HEK293 (cell line): ENCODE measurements at regions of chr5 and their contacts with region 1.

Region 1: GRCh38 chr5:150560401-150561193 is 52.7 kb downstream of the NDST1 start:
- H3K4me3 ChIP-seq: no peak overlapping the region
- H3K27ac ChIP-seq: no peak overlapping the region
- H3K4me1 ChIP-seq: no peaks in the 10 kb centered on the region
- CTCF ChIP-seq: peak; percentile 46

Region 2: GRCh38 chr5:150458819-150459557 is 101.6 kb before region 1 on chr5:
- CTCF ChIA-PET with region 1: interaction called, 64 read pairs
- POLR2A ChIA-PET with region 1: no interaction called
- H3K4me3 ChIP-seq: no peak overlapping the region
- H3K27ac ChIP-seq: no peak overlapping the region
- H3K4me1 ChIP-seq: peaks cover 8% of the 10 kb centered on the region
- CTCF ChIP-seq: peak; percentile 75

Region 3: GRCh38 chr5:150523472-150524350 is 36.9 kb before region 1 on chr5:
- CTCF ChIA-PET with region 1: no interaction called
- POLR2A ChIA-PET with region 1: no interaction called
- H3K4me3 ChIP-seq: no peak overlapping the region
- H3K27ac ChIP-seq: no peak overlapping the region
- H3K4me1 ChIP-seq: no peaks in the 10 kb centered on the region
- CTCF ChIP-seq: peak; percentile 66; the same call in 1 of the 2 replicates

Region 4: DNA sequence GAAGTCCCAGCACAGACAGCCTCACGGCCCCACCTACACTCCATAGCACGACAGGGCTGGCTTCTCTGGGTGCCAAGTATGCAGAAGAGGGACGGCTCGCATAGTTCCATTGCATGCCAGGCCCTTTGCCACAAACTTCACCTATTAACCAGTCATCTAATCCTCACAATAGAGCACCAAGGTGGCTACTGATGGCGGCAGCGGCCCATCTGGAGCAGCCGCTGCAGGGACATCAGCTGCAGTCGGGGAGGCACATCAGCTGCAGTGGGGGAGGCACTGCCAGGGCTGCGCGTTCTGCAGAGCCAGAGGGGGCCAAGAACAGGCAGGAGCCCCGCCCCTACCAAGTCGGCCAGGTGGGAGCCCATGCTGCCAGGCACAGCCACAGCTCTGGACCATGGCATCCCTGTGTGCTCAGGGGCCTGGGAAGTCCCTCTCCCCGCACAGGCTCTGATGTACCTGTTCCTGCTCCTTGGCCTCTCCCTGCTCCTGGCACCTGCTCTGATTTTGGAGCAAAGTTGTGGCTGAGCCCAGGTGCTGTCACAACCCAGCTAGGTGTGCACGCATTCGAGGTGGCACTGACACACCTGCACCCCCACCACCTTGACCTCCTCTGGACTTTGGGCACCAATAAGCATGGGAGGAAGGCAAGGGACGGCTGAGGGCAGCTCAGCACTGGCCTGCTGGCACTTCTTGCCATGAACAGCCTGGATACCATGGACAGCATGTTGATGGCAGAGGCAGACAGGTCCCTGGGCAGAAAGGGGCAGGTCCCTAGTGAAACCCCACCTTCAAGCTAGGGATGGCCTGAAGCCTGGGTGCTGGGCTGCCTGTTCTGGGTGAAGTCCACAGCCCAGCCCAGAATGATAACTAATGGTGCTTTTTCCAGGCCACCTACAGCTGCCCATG is 18.4 kb after region 1 on chr5:
- CTCF ChIA-PET with region 1: interaction called, 14 read pairs
- POLR2A ChIA-PET with region 1: no interaction called
- H3K4me3 ChIP-seq: no peak overlapping the region
- H3K27ac ChIP-seq: no peak overlapping the region
- H3K4me1 ChIP-seq: no peaks in the 10 kb centered on the region
- CTCF ChIP-seq: no peak

Region 5: GRCh38 chr5:150640311-150641005 is 79.9 kb after region 1 on chr5 and contains the start of gene SYNPO:
- CTCF ChIA-PET with region 1: interaction called, 60 read pairs
- POLR2A ChIA-PET with region 1: interaction called, 3 read pairs
- H3K4me3 ChIP-seq: no peak within 1 kb of the TSS
- H3K27ac ChIP-seq: no peak within 1 kb of the TSS
- H3K4me1 ChIP-seq: peaks cover 34% of the 10 kb centered on the region
- CTCF ChIP-seq: no peak

Region 6: DNA sequence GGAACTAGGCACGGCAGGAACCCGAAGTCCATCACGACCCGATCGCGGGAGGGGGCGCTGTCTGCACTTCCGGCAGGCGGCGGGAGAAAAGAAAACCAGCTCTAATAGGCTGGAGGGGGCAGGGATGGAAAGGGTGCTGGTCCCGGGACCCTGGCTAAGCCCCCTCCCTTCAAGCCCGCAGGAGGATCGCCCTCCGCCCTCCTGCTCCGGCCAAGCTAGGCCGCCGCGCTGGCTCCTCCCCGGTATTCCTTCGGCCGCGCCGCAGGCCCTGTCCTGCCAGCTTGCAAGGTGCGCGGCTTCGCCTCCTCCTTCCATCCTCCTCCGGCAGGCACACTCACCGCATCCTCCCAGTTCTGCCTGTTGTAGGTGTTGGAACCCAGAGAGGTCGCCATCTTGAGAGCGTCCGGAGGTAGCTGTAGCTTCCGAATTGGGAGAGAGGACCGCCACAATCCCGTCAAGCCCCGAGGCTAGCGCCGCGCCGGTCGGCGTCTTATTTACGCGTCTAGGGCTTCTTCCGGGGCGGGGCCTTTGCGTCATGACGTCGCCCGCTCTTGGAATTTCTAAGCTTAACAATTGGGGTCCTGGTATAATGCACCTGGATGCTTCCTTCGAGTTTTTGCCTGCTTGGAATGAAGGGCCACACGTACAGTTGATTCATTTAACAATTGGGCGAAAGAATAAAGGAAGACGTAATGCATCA is 140.1 kb after region 1 on chr5 and contains the start of gene RBM22:
- CTCF ChIA-PET with region 1: interaction called, 14 read pairs
- POLR2A ChIA-PET with region 1: interaction called, 3 read pairs
- H3K4me3 ChIP-seq: peak within 1 kb of the TSS; percentile 80
- H3K27ac ChIP-seq: peak within 1 kb of the TSS; percentile 90
- H3K4me1 ChIP-seq: peaks cover 2% of the 10 kb centered on the region
- CTCF ChIP-seq: peak; percentile 90

Region 7: GRCh38 chr5:150778517-150779396 is 218.2 kb after region 1 on chr5 and contains the start of gene SMIM3:
- CTCF ChIA-PET with region 1: interaction called, 14 read pairs
- POLR2A ChIA-PET with region 1: no interaction called
- H3K4me3 ChIP-seq: peak within 1 kb of the TSS; percentile 64
- H3K27ac ChIP-seq: peak within 1 kb of the TSS; percentile 33; the same call in 1 of the 2 replicates
- H3K4me1 ChIP-seq: peaks cover 11% of the 10 kb centered on the region
- CTCF ChIP-seq: peak; percentile 70

Region 8: DNA sequence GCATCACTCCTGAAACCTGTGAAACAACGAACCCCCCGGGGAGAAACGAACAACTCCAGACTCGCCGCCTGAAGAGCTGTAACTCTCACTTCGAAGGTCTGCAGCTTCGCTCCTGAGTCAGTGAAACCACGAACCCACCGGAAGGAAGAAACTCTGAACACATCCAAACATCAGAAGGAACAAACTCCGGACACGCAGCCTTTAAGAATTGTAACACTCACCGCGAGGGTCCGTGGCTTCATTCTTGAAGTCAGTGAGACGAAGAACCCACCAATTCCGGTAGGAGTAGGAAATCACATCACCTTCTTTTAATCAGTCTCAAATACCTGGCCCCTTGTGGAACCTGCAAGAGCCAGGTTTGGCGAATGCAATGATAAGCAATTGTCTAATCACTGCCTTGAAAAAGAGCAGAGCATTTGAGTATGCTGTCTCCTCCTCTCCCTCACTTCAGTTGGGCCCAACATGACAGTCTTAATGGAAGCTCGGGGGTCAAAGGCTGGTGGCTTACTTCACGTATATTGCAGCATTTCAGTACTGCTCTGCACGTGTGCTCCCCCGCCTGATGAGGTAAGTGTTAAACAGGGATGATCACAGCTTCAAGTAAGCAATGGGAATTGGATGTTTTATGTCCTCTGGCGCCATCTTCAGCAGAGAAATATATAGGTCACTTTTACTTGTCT is 286.2 kb after region 1 on chr5:
- CTCF ChIA-PET with region 1: interaction called, 31 read pairs
- POLR2A ChIA-PET with region 1: no interaction called
- H3K4me3 ChIP-seq: no peak overlapping the region
- H3K27ac ChIP-seq: no peak overlapping the region
- H3K4me1 ChIP-seq: no peaks in the 10 kb centered on the region
- CTCF ChIP-seq: peak; percentile 82